Astrocyte of the cerebellum (primary cell): ENCODE measurements at regions of chr5 and their contacts with region 1.

Region 1: DNA sequence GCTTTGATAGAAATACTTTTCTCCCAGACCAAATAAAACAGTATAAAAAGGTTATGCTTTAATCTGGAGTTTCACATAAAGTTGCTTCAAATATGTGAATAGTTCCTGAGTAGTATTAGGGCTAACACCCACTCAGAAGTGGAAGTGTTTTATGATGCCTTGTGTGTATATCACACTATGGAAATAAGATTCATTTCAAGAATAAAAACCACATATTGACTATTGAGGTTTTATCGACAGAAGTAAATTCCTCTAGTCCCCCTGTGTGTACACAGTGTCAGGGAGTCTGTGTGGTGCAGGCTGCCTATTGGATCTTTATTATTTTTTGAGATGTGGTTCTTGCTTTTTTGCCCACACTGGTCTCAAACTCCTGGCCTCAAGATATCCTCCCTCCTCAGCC is 20.8 kb upstream of the LRRTM2 start:
- DNase-seq: no peak
- H3K4me3 ChIP-seq: no peak overlapping the region
- CTCF ChIP-seq: no peak

Region 2: DNA sequence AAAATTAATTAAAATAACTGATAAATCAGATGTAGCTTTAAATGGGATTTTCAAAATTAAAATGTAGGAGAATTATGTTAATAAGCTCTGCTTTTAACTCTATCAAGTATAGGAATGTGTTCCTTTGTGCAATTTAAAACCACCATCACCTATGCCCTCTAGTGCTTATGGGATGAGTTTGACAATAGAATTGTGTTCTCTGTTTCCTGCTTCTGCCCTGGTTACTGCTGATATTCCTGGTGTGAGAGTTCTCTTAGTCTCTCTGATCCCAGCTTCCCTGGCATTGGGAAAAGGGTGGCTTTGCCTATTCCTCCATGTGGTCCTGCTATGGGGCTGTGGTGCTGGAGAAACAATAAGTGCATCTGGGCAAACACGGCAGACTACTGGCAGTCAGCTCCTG is 28.9 kb before region 1 on chr5:
- in situ Hi-C with region 1: no loop called
- DNase-seq: no peak
- H3K4me3 ChIP-seq: no peak overlapping the region
- CTCF ChIP-seq: no peak

Region 3: GRCh38 chr5:138932171-138932810 is 36.4 kb after region 1 on chr5:
- in situ Hi-C with region 1: loop called (anchors 5 kb)
- DNase-seq: no peak
- H3K4me3 ChIP-seq: no peak overlapping the region
- CTCF ChIP-seq: peak; percentile 11

Region 4: DNA sequence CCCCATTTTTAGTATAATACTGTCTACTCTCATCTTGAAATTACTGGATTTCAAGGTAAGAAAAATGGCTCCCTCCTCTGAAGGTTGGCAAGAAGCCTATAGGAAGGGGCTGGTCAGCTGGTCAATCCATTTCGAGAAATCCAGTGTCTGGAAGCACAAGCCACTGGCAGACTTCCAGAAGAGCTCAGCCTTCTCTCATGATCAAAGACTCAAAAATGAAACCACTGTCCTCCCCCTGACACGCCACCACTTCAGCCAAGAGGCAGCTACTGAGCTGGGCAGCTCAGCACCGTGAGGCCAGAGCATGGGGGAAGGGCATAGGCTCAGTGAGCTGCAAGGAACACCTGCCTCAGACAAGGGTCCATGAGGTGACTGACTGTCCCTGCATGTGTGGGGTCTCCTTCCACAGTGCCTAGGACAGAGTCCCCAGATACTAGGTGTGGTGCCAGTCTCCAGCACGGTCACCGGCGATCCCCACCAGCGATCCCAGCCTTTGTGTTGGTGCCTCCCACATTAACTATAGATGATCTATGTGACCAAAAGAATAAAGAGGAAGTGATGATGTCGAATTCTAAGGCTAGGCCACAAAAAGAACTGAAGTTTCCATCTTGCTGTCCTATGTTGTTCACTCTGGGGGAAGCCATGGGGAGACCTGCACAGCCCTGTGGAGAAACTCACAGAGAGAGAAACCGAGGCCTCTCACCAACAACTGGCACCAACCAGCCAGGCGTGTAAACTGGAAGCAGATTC is 79.4 kb after region 1 on chr5:
- in situ Hi-C with region 1: no loop called
- DNase-seq: peak; percentile 59
- H3K4me3 ChIP-seq: no peak overlapping the region
- CTCF ChIP-seq: no peak

Region 5: DNA sequence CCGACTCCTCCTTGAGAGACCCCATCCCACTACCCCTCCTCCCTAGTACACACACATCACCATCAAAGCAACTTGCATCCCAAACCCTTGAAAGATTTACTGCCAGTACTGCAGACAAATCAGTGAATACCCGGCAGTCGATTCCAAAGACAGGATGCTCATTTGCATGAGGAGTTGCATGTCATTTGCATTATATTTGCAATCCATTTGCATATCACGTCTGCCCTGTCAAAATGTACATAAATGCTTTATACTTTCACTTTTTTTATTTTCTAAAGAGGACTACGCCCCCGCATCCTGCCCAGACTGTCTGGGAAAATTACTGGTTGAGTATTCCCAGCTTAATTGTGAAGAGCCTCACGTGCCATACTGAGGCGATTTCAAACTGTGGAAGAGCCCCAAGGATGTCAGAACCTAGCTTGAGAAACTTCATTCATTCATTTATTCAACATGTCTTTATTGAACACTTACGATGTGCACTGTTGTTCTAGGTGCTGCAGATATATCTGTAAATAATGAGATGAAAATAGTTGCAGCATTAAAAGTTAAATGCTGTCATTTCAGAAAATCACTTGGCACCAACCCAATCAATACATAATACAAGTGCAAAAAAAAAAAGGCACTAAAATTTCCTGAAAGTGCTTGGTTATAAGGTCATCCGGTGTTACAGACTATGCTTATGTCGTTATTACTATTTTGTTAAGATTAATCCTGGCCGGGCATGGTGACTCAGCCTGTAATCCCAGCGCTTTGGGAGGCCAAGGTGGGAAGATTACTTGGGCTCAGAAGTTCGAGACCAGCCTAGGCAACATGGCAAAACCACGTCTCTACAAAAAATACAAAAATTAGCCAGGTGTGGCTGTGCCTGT is 319.4 kb after region 1 on chr5:
- in situ Hi-C with region 1: no loop called
- DNase-seq: no peak
- H3K4me3 ChIP-seq: no peak overlapping the region
- CTCF ChIP-seq: no peak